Mammary epithelial cell (primary cell): ENCODE measurements at regions of chr1 and their contacts with region 1.

Region 1: DNA sequence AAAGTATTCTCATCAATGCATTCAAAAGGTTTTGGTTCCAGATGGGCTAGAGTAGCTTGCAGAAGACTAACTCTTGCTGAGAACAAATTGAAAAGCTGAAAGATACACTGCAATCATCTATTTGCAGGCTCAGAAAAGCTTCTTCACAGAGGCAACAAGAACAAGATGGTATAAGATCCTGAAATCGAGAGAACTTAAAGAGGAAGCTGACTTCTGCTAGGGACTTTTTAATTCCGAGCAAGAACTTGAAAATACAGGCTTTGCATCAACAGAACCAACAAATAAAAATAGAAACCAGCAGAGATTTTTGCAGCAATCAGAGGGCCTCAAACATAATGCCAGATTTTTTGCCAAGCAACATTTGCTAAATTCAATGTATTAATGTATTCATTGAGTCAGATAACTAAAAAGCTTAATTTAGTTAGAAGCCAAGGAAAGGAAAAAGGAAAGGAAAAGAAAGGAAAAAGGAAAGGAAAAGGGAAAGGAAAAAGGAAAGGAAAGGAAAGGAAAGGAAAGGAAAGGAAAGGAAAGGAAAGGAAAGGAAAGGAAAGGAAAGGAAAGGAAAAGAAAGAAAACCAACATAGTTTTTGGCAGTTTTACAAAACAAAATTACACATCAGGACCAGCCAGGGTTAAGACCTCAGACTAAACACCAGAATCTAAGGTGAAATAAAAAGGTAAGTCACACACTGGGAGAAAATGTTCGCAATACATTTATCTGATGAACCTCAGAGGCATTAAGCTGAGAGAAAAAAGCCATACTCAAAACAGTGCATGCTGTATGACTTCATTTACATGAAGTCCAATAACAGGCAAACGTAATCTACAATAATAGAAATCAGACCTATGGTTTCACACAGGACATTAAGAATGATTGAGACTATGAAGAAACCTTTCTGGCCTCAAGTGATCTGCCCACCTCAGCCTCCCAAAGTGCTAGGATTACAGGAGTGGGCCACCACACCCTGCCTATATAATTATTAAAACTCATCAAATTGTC is 42.6 kb downstream of the FAF1 start:
- DNase-seq: no peak
- H3K4me3 ChIP-seq: no peak overlapping the region
- H3K27ac ChIP-seq: no peak overlapping the region
- H3K4me1 ChIP-seq: no peaks in the 10 kb centered on the region
- H3K27me3 ChIP-seq: no peaks in the 10 kb centered on the region
- CTCF ChIP-seq: no peak

Region 2: DNA sequence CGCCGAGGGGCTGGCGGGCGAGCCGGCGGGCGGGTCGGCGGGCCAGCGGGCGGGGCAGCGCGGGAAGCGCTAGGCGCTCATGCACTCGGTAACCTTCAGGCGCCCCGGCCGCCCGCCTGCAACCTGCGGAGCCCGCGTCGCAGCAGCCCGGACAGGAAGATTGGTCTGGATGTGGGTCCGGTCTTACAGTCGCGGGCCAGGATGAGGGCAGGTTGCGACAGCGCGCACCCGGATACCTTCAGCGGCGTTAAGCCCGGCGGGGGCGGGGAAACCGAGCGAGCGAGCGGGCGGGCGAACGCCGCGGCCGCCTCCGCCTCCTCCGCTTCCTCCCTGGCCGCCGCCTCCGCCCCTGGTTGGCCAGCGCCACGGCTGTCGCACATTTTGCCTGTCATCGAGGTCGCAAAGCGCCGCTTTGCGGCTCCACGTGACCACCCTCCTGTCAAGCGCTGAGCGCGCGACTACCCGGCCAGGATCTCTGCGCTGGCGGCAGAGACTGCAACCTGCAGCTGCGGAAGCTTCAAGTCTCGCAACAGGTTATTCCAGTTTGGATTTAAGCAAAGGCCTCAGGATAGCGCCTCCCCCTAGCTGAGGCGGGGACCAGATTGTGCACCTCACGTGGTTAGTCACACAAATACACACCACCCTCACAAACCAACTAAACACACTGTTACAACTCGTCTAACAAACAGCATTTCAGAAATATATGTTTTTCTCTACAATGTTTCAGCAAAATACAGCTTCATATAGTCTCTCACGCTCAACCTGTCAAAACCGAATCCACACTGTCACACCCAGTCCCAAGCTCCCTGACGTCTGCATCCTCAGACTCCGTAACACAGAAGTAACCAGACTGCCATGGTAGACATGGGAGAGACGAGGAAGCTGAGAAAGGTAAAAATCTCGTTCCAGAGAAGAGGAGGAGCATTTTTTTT is 42.7 kb after region 1 on chr1 and contains the start of gene FAF1:
- CTCF ChIA-PET with region 1: no interaction called
- dilution Hi-C with region 1: loop called (anchors 5 kb)
- in situ Hi-C with region 1: no loop called
- intact Hi-C with region 1: no loop called
- DNase-seq: peak; percentile 98
- H3K4me3 ChIP-seq: peak within 1 kb of the TSS; percentile 71 to 92 (median 87)
- H3K27ac ChIP-seq: peak within 1 kb of the TSS; percentile 70
- H3K4me1 ChIP-seq: peaks cover under 1% of the 10 kb centered on the region
- H3K27me3 ChIP-seq: no peaks in the 10 kb centered on the region
- CTCF ChIP-seq: peak; percentile 30 to 44
- total RNA-seq, gene FAF1: 56.3 to 72.8 TPM